ENCODE measurements at regions of chr3 and their contacts with region 1.

Region 1: DNA sequence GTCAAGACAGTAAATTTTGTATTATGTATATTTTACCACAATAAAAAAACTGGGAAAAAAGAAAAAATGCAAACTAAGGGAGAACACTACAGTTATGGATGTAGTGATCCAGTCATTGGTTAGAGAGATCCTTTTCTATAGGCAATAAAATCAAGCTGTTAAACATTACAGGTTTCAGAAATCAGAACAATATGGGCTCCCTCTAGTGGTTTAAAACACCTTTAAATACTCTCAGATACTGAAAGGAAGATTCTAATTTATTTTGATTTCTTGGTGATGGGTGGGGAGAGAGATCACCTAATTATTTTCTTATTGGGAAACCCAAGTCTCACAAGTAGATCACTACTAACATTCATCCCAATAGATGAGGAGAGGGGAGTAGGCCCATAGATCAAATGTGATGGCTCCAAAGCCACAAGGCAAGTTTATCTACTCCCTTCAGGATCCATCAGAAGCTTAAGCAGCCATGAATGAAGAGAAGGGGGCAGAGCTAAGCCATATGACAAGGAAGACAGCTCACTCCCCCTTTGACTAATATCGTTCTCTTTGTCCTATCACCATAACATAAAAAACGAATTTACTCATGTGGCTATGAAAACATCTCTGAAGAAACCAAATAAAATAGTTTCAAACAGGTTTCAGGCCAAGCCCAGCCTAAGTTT is 118.6 kb downstream of the ANO10 start:
- DNase-seq: peak in 1 of 35 experiments; percentile 68
- ATAC-seq: peak; percentile 57 to 60 (median 58)
- H3K4me3 ChIP-seq: no peak overlapping the region
- H3K4me3 Mint-ChIP-seq: no peak overlapping the region
- H3K27ac ChIP-seq: no peak overlapping the region
- H3K27ac Mint-ChIP-seq: peak overlapping the region in 1 of 2 donors; percentile 56
- H3K4me1 ChIP-seq: peaks cover 13 to 31% of the 10 kb centered on the region in 2 experiments
- H3K4me1 Mint-ChIP-seq: peaks cover 48 to 56% (median 54%) of the 10 kb centered on the region in 3 donors
- H3K27me3 ChIP-seq: no peaks in the 10 kb centered on the region
- H3K27me3 Mint-ChIP-seq: no peaks in the 10 kb centered on the region

Region 2: DNA sequence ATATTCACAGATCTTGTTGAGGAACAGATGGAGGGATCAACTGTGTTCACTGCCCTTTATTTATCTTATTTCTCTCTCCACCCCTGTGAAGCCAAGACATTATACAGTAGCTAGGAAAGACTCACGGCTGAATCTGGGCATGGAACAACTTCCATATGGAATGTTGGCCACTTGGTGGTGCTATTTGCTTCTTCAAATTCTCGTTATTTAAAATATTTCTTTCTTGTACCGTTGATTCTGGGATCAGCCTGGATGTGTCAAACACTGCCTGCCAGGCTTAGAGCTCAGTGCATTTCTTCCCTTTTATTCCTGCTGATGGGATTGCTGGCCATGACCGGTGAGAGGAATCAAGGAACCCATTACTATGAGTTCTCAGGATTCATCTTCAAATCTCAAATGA is 541.6 kb before region 1 on chr3:
- CTCF ChIA-PET with region 1: interaction called, 3 to 14 read pairs
- POLR2A ChIA-PET with region 1: interaction called in 1 of 2 experiments, 3 read pairs
- DNase-seq: peak in 20 of 35 experiments; percentile 4 to 65 (median 15)
- ATAC-seq: peak in 1 of 4 experiments; percentile 32
- H3K4me3 ChIP-seq: no peak overlapping the region
- H3K4me3 Mint-ChIP-seq: no peak overlapping the region
- H3K27ac ChIP-seq: no peak overlapping the region
- H3K27ac Mint-ChIP-seq: no peak overlapping the region
- H3K4me1 ChIP-seq: peaks cover 4 to 24% of the 10 kb centered on the region in 2 experiments
- H3K4me1 Mint-ChIP-seq: peaks cover 28 to 31% (median 31%) of the 10 kb centered on the region in 3 donors
- H3K27me3 ChIP-seq: no peaks in the 10 kb centered on the region
- H3K27me3 Mint-ChIP-seq: peaks cover 0 to 6% of the 10 kb centered on the region in 2 donors

Region 3: DNA sequence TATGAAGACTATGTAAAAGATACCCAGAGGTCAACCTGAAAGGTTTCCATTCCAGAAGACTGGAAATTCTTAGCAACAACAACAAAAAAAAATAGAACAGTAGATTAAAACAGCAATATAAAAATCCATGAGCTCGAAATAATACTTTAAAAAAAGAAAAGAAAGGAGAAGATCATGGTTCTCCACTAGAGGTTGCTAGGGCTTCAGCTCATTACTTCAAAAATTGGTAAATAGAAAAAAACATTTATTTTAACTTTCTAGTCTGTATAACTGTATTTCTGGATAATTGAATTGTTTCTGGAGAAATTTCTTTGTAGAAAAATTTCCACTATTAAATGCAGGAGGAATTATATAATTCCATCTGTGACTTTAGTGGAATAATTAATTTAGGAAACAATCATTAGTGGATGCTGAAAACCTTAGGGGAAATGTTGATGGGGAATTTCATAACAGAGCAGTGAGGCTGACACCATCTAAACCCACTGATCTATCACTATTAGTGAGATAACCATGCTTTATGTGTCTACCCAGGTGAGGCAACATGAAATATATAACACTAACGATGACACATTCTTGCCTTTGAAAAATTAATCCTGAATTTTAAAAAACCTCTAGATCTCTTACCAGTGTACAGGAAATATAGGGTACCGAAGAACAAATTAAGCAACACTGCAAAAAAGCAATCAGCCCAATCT is 279.4 kb before region 1 on chr3:
- CTCF ChIA-PET with region 1: interaction called in 1 of 2 experiments, 47 read pairs
- POLR2A ChIA-PET with region 1: no interaction called
- DNase-seq: peak in 1 of 35 experiments; percentile 52
- ATAC-seq: no peak
- H3K4me3 ChIP-seq: no peak overlapping the region
- H3K4me3 Mint-ChIP-seq: peak overlapping the region in 1 of 3 donors; percentile 57
- H3K27ac ChIP-seq: no peak overlapping the region
- H3K27ac Mint-ChIP-seq: peak overlapping the region; percentile 42 to 81
- H3K4me1 ChIP-seq: peaks cover 23 to 43% of the 10 kb centered on the region in 2 experiments
- H3K4me1 Mint-ChIP-seq: peaks cover 59 to 65% (median 60%) of the 10 kb centered on the region in 3 donors
- H3K27me3 ChIP-seq: no peaks in the 10 kb centered on the region
- H3K27me3 Mint-ChIP-seq: no peaks in the 10 kb centered on the region

Region 4: GRCh38 chr3:43326891-43327581 is 176.2 kb before region 1 on chr3:
- CTCF ChIA-PET with region 1: no interaction called
- POLR2A ChIA-PET with region 1: no interaction called
- DNase-seq: no peak
- ATAC-seq: peak; percentile 43 to 51 (median 47)
- H3K4me3 ChIP-seq: no peak overlapping the region
- H3K4me3 Mint-ChIP-seq: peak overlapping the region; percentile 21 to 64 (median 45)
- H3K27ac ChIP-seq: peak overlapping the region; percentile 53
- H3K27ac Mint-ChIP-seq: peak overlapping the region; percentile 87 to 88
- H3K4me1 ChIP-seq: peaks cover 27 to 40% of the 10 kb centered on the region in 2 experiments
- H3K4me1 Mint-ChIP-seq: peaks cover 81 to 86% (median 84%) of the 10 kb centered on the region in 3 donors
- H3K27me3 ChIP-seq: no peaks in the 10 kb centered on the region
- H3K27me3 Mint-ChIP-seq: no peaks in the 10 kb centered on the region

Region 5: DNA sequence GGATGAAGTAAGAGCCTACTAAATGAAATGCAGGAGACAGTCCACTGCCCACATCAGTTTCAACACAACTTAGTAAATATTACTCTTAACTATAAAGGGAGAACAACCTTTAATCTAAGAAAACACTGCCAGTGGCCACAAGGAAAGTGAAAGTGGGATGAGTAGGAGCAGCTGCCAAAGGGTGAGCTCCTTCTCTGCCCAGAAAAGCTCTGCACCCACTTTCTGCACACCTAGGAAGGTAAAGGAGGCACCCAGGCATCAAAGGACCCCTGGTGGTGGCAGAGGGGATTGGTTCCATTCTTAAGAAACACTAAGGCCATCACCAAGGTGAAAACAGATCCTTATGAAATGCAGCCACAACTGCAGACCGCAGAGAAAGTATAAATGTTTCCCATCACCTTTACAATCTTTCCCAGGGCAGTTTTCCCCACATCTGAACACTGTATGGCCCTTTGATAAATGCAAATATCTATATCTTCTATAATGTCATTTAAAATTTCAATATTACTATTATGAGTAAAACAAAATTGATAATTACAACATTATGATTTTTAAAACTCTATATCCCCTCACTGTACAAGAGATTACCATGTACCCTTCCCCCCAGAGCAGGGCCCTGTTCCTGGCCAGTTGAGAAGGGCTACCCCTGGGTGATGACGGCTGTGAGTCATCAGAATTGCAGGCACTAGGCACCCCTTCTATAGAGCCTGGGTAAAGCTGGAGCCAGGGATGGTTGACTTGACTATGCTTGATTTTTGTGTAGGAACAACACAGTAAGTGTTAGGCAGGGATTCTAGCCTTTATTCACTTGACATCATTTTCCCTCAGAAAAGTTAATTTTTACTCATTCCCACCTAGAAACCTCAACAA is 124.9 kb before region 1 on chr3:
- CTCF ChIA-PET with region 1: interaction called, 3 to 12 read pairs
- POLR2A ChIA-PET with region 1: interaction called in 1 of 2 experiments, 3 read pairs
- DNase-seq: peak; percentile 48 to 86 (median 70)
- ATAC-seq: peak; percentile 92 to 98 (median 96)
- H3K4me3 ChIP-seq: no peak overlapping the region
- H3K4me3 Mint-ChIP-seq: no peak overlapping the region
- H3K27ac ChIP-seq: no peak overlapping the region
- H3K27ac Mint-ChIP-seq: peak overlapping the region; percentile 57 to 63
- H3K4me1 ChIP-seq: peaks cover 3 to 15% of the 10 kb centered on the region in 2 experiments
- H3K4me1 Mint-ChIP-seq: peaks cover 17 to 20% (median 17%) of the 10 kb centered on the region in 3 donors
- H3K27me3 ChIP-seq: no peaks in the 10 kb centered on the region
- H3K27me3 Mint-ChIP-seq: no peaks in the 10 kb centered on the region

Region 6: DNA sequence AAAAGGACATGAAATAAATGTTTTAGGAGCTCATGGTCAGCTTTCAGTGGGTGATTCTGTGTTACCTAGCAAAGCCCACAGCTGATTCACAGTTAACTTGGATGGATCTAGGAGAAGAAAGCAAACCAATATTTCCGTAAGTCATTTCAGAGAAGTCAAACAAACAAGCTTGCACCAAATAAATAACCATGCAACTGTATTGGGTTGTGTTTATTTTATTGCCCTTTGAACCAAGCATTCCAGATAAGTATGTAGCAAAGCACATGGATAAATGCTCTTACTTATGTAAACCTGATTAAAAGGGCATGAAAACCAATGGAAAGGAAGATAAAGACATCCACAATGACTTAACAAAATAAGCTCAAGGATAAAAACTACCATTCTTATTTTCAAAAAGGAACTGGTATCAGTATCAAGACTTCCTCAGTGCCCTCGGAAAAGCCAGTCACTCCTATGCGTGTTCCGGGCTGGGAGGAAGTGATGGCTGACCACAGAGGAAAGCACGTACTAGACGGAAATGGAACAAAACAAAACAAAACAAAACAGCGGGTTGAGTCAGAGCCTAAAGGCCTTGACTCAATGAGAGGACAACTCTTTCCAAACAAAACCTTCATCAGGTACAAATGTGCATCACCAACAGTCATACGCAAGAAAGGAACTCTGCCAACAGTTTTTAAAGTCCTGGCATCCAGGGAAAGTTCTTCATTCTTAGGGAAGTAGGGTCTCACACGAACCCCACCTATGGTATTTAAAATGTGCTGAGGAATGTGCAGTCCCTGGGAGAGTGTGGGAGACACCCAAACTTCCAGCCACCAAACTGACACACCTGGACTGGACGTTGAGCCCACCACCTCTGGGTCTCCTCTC is 113.6 kb before region 1 on chr3:
- CTCF ChIA-PET with region 1: interaction called in 1 of 2 experiments, 10 read pairs
- POLR2A ChIA-PET with region 1: no interaction called
- DNase-seq: peak; percentile 52 to 89 (median 73)
- ATAC-seq: peak; percentile 94 to 98 (median 96)
- H3K4me3 ChIP-seq: peak overlapping the region; percentile 8 to 15
- H3K4me3 Mint-ChIP-seq: peak overlapping the region; percentile 26 to 60 (median 53)
- H3K27ac ChIP-seq: peak overlapping the region; percentile 91
- H3K27ac Mint-ChIP-seq: peak overlapping the region; percentile 96 to 97
- H3K4me1 ChIP-seq: peaks cover 35 to 36% of the 10 kb centered on the region in 2 experiments
- H3K4me1 Mint-ChIP-seq: peaks cover 85 to 93% (median 85%) of the 10 kb centered on the region in 3 donors
- H3K27me3 ChIP-seq: no peaks in the 10 kb centered on the region
- H3K27me3 Mint-ChIP-seq: no peaks in the 10 kb centered on the region